ENCODE measurements at regions of chr11 and their contacts with region 1.

Region 1: DNA sequence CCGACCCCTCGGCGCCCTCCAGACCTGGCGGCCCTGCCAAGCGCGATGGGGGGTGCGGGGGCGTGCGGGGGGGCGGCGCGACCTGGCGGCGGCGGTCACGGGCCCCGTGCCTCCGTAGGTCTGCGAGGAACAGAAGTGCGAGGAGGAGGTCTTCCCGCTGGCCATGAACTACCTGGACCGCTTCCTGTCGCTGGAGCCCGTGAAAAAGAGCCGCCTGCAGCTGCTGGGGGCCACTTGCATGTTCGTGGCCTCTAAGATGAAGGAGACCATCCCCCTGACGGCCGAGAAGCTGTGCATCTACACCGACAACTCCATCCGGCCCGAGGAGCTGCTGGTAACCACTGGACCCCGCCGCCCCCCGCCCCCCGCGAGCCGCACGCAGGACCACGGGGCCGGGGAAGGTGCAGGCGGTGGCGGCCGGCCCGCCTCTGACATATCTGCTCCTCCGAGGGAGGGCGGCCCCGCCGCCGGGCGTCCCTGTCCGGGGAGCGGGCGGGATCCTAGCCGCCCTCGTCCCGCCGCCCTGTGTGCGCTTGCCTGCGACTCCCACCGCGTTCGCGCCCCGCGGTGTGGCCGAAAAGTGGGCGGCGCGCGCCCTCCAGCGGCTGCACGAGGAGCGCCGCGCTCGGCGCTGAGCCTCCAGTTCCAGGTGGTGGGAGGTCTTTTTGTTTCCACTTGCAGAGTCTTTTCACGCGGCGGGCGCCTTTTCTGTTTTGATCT is 2.1 kb downstream of the CCND1 start:
- DNase-seq: no peak
- H3K4me3 ChIP-seq: peak overlapping the region; percentile 87
- H3K27me3 ChIP-seq: no peaks in the 10 kb centered on the region
- CTCF ChIP-seq: peak; percentile 73

Region 2: GRCh38 chr11:69101115-69101791 is 541.8 kb before region 1 on chr11:
- CTCF ChIA-PET with region 1: interaction called, 82 read pairs
- POLR2A ChIA-PET with region 1: no interaction called
- DNase-seq: no peak
- H3K4me3 ChIP-seq: no peak overlapping the region
- H3K27me3 ChIP-seq: no peaks in the 10 kb centered on the region
- CTCF ChIP-seq: peak; percentile 100

Region 3: DNA sequence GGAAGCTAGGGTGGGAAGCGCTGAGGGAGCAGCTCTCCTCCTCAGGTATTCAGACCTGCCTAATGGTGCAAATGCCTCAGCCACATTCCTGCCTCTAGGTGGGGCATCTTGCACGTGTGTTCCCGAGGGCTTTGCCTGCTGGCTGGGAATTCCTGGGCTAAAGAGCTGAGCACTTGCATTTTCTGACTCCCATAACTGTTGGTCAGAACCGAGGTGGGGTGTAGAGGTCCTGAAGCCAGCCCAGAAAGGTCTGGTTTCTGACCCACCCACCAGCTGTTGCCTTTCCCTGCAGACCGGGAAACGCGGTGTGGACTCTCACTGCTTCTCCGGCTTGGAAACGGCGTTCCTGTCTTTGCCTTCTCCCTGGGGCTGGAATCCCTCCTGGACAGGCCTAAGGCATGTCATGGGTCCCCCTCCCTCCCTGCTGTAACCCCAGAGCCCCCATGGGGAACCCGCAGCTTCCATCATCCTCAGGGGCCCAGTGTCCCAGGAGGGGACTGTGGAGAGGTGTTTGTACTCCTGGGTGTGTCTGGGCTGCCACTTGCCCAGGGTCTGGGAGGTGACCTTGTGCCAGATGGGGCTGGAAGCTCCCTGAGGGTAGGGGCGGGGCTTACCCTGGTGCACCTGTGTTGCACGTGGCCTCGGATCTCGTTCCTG is 511.3 kb before region 1 on chr11:
- CTCF ChIA-PET with region 1: interaction called, 29 read pairs
- POLR2A ChIA-PET with region 1: no interaction called
- DNase-seq: no peak
- H3K4me3 ChIP-seq: no peak overlapping the region
- H3K27me3 ChIP-seq: no peaks in the 10 kb centered on the region
- CTCF ChIP-seq: peak; percentile 90

Region 4: GRCh38 chr11:69419662-69420395 is 223.2 kb before region 1 on chr11:
- CTCF ChIA-PET with region 1: no interaction called
- POLR2A ChIA-PET with region 1: interaction called, 18 read pairs
- DNase-seq: no peak
- H3K4me3 ChIP-seq: no peak overlapping the region
- H3K27me3 ChIP-seq: no peaks in the 10 kb centered on the region
- CTCF ChIP-seq: no peak

Region 5: GRCh38 chr11:69630009-69630408 is 13.1 kb before region 1 on chr11:
- CTCF ChIA-PET with region 1: no interaction called
- POLR2A ChIA-PET with region 1: no interaction called
- DNase-seq: no peak
- H3K4me3 ChIP-seq: no peak overlapping the region
- H3K27me3 ChIP-seq: no peaks in the 10 kb centered on the region
- CTCF ChIP-seq: no peak

Region 6: DNA sequence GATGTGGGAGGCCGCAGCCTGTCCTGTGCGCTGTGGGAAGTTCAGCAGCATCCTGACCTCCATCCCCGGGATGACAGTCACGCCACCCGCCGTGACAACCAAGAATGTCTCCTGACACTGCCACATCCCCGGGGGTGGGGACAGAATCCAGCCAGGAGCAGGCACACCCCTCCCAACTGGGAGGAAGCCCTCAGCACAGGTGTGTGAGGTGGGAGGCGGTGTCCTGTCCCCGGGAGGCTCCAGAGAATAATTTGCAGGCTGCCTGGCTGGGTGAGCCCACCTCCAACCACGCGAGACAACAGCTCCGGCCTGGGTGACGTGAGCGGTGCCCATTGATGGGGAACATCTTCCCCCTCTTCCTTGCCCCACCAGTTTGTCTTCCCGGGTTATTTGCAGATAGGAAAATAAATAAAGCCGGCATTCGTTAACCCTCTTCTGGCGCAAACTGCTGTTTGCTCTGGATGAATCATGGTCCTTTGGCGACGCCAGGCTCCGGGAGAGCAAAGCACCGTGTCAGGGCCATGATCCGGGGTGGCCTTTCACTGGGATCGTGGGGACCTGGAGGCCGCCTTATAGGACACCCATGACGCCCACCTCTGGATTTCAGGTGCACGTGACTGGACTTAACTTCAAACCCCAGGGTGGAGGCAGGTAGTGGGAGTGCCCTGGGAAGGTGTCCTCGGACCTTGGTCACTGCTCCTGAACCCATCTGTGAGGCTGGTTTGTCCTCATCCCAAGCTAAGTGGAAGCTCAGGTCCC is 11.7 kb after region 1 on chr11:
- CTCF ChIA-PET with region 1: interaction called, 26 read pairs
- POLR2A ChIA-PET with region 1: no interaction called
- DNase-seq: no peak
- H3K4me3 ChIP-seq: no peak overlapping the region
- H3K27me3 ChIP-seq: no peaks in the 10 kb centered on the region
- CTCF ChIP-seq: no peak

Region 7: DNA sequence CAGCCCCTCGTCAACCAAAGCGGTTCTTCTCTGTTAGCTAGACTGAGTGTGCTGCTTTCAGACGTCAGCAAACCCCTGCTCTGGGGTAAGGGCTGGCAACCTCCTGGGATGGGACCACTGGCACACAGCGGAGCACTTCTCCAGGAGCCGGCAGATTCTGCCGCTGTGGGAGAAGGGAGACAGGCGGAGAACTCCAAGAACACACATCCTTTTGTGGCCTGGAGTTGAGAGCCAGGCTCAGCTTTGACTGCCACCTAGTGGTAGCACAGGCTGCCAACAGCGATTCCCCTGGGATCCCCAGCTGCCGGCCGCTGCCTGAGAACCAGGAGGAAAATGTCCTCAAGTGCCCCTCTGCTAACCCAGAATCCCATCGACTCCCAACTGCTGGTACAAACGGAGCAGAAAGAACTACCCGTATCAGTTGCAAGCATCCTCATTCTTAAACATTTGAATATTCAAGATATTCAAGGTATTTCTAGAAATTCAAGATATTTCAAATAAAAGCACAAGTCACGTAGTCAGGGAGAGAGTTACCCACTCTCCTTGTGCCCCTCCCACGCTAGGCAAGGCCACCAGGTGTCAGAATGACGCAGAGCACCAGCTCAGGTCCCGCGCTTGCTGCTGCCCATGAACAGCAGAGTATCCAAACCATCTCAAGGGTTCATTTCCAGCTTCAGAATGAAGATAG is 27.2 kb after region 1 on chr11:
- CTCF ChIA-PET with region 1: interaction called, 34 read pairs
- POLR2A ChIA-PET with region 1: interaction called, 8 read pairs
- DNase-seq: no peak
- H3K4me3 ChIP-seq: no peak overlapping the region
- H3K27me3 ChIP-seq: no peaks in the 10 kb centered on the region
- CTCF ChIP-seq: peak; percentile 97